ENCODE measurements at regions of chr3 and their contacts with region 1.

Region 1: DNA sequence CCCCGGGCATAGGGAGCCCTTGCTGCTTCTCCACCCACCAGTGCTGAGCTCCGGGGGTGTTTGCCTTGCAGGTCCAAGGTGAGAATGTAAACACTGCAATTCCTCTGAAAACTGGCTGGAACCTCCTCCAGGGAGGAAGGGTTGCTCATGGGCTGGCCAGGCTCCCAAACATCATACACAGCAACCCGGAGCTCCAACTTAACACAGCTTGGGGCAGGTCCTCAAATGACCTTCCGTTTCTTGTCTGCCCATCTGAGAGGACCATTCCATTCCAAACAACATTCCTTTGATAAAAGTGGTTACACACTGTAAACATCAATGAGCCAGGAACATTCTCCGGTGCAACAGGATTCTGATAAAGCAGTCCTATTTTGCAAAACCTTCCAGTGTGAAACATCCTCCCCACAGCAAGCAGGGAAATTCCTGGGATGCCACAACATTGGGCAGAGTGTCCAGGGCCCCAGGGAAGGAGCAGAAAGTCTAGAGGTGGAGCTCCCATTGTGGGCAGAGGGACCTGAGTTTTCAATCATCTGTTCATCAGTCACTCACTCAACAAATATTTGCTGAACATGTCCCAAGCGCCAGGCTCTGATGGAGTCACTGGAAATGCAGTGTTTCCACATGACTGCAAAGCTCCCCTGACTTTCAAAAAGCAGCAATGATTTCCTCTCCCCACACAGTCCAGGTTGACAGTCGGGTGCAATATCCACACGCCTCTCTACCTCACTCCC is 7.3 kb upstream of the HEG1 start:
- DNase-seq: peak; percentile 33 to 41
- ATAC-seq: peak; percentile 7 to 82 (median 45)
- H3K4me3 ChIP-seq: no peak overlapping the region
- H3K27ac ChIP-seq: peak overlapping the region in 9 of 10 donors; percentile 20 to 89 (median 85)
- H3K4me1 ChIP-seq: peaks cover 15 to 59% (median 44%) of the 10 kb centered on the region in 9 donors
- H3K27me3 ChIP-seq: no peaks in the 10 kb centered on the region
- CTCF ChIP-seq: no peak

Region 2: GRCh38 chr3:125141596-125142419 is 78.8 kb after region 1 on chr3:
- intact Hi-C with region 1: loop called in 6 of 10 experiments (anchors 5 kb)
- DNase-seq: peak; percentile 78 to 82
- ATAC-seq: peak; percentile 76 to 92 (median 87)
- H3K4me3 ChIP-seq: peak overlapping the region in 9 of 10 donors; percentile 21 to 51 (median 47)
- H3K27ac ChIP-seq: peak overlapping the region; percentile 59 to 94 (median 84)
- H3K4me1 ChIP-seq: peaks cover 26 to 80% (median 59%) of the 10 kb centered on the region in 9 donors
- H3K27me3 ChIP-seq: no peaks in the 10 kb centered on the region
- CTCF ChIP-seq: peak in 8 of 9 donors; percentile 23 to 74 (median 58)